ENCODE measurements at regions of chr11 and their contacts with region 1.

Region 1: DNA sequence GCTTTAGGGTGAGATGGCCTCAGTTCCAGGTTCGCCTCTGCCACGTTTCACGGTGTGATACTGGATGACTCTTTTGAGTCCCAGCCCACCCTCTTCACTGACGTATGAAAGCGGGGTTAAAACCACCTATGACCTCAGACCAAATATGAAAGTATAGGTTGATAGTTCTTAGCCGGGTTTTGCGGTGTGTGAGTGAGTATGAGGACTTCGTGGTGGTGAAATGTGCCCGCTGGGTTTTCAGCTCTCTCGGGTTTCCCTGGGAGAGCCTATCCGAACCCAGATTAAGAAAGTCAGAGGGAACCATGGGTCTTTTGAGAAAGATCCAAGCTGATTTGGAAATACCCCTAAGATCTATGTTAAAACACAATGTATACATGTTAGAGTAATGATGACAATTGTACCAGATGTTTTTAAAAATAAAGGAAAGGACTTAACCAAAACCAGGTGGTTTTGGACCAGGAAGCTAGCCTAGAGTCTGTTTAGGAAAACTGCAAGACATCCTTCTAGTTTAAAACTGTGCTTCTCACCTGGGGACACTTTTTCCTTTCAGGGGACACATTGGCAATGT is 25.8 kb upstream of the ST3GAL4 start:
- DNase-seq: peak; percentile 78
- ATAC-seq: peak; percentile 84
- H3K4me3 Mint-ChIP-seq: peak overlapping the region; percentile 3
- H3K27ac Mint-ChIP-seq: peak overlapping the region; percentile 88
- H3K4me1 Mint-ChIP-seq: peaks cover 26% of the 10 kb centered on the region
- H3K27me3 Mint-ChIP-seq: no peaks in the 10 kb centered on the region

Region 2: GRCh38 chr11:126318574-126319373 is 11.0 kb before region 1 on chr11:
- CTCF ChIA-PET with region 1: interaction called, 24 read pairs
- DNase-seq: peak; percentile 68
- ATAC-seq: peak; percentile 83
- H3K4me3 Mint-ChIP-seq: peak overlapping the region; percentile 34
- H3K27ac Mint-ChIP-seq: peak overlapping the region; percentile 88
- H3K4me1 Mint-ChIP-seq: peaks cover 40% of the 10 kb centered on the region
- H3K27me3 Mint-ChIP-seq: no peaks in the 10 kb centered on the region

Measured in activated CD8-positive, alpha-beta memory T cell treated with anti-CD3 and anti-CD28 coated beads, Interleukin-2, amount 10 ng/mL, durations not matched to agents 7 days and 5 days (primary cell).